ENCODE measurements at regions of chr1 and their contacts with region 1.

Region 1: GRCh38 chr1:115706587-115707425 is 61.7 kb downstream of the CASQ2 start:
- DNase-seq: peak; percentile 57
- H3K4me3 ChIP-seq: no peak overlapping the region
- H3K27ac ChIP-seq: no peak overlapping the region
- H3K4me1 ChIP-seq: no peaks in the 10 kb centered on the region
- CTCF ChIP-seq: peak; percentile 89

Region 2: GRCh38 chr1:115530431-115530876 is 176.4 kb before region 1 on chr1:
- CTCF ChIA-PET with region 1: no interaction called
- POLR2A ChIA-PET with region 1: no interaction called
- intact Hi-C with region 1: no loop called
- DNase-seq: no peak
- H3K4me3 ChIP-seq: no peak overlapping the region
- H3K27ac ChIP-seq: no peak overlapping the region
- H3K4me1 ChIP-seq: no peaks in the 10 kb centered on the region
- CTCF ChIP-seq: no peak

Region 3: DNA sequence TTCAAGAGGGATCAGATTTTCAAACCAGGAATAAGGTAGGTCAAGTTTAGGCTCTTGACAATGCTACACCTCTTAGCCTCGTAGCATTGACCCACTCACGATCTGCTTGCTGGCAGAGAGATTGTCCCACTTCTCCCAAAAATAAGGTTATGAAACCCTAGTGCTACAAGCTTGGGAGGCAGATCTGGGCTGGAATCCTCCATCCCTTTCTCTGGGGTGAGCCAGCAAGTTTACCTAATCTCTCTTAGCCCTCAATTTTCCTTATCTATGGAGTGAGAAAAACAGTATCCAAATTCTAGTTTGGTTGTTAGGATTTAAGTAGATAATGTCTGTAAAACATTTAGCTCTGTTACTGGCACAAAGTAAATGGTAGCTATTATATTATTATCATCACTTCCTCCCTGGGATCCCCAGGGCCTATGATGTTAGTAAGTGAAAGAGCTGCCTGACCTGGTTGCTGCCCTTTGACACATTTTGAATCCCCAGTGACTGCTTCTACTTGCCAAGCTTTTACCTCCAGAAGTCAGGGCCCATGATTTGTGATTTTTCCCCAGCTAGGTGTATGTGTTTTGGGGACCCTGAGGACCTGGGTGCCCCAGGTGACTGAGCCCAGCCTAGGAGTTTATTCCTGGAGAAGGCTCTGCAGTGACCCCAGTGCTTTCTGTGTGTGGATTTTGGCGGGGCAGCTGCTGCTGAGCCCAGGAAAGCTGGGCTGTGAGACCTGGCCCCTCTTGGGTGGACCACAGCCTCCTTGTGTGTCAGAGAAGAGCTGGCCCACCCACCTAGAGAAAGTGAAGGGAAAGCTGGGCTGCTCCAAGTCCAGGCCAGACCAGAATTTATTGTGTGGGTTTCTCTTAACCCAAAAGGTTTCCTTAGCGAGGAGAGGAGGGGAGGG is 113.2 kb before region 1 on chr1:
- CTCF ChIA-PET with region 1: no interaction called
- POLR2A ChIA-PET with region 1: no interaction called
- intact Hi-C with region 1: no loop called
- DNase-seq: no peak
- H3K4me3 ChIP-seq: no peak overlapping the region
- H3K27ac ChIP-seq: no peak overlapping the region
- H3K4me1 ChIP-seq: no peaks in the 10 kb centered on the region
- CTCF ChIP-seq: no peak

Region 4: GRCh38 chr1:115609021-115609420 is 97.8 kb before region 1 on chr1:
- CTCF ChIA-PET with region 1: no interaction called
- POLR2A ChIA-PET with region 1: no interaction called
- intact Hi-C with region 1: loop called (anchors 5 kb)
- DNase-seq: no peak
- H3K4me3 ChIP-seq: no peak overlapping the region
- H3K27ac ChIP-seq: no peak overlapping the region
- H3K4me1 ChIP-seq: no peaks in the 10 kb centered on the region
- CTCF ChIP-seq: no peak

Measured in OCI-LY7 (cell line).